AG04449 (cell line): ENCODE measurements at regions of chr5 and their contacts with region 1.

Region 1: GRCh38 chr5:96336351-96336985 is 96.6 kb downstream of the PCSK1 start:
- DNase-seq: peak; percentile 72
- H3K4me3 ChIP-seq: no peak overlapping the region
- CTCF ChIP-seq: peak; percentile 80

Region 2: GRCh38 chr5:95858661-95859326 is 477.7 kb before region 1 on chr5:
- CTCF ChIA-PET with region 1: interaction called, 41 read pairs
- POLR2A ChIA-PET with region 1: interaction called, 3 read pairs
- DNase-seq: peak; percentile 97
- H3K4me3 ChIP-seq: peak overlapping the region; percentile 57
- CTCF ChIP-seq: peak; percentile 99

Region 3: GRCh38 chr5:95961617-95962474 is 374.6 kb before region 1 on chr5 and contains the start of gene ELL2:
- CTCF ChIA-PET with region 1: interaction called, 43 read pairs
- POLR2A ChIA-PET with region 1: no interaction called
- DNase-seq: peak; percentile 86
- H3K4me3 ChIP-seq: peak within 1 kb of the TSS; percentile 92
- CTCF ChIP-seq: no peak

Region 4: DNA sequence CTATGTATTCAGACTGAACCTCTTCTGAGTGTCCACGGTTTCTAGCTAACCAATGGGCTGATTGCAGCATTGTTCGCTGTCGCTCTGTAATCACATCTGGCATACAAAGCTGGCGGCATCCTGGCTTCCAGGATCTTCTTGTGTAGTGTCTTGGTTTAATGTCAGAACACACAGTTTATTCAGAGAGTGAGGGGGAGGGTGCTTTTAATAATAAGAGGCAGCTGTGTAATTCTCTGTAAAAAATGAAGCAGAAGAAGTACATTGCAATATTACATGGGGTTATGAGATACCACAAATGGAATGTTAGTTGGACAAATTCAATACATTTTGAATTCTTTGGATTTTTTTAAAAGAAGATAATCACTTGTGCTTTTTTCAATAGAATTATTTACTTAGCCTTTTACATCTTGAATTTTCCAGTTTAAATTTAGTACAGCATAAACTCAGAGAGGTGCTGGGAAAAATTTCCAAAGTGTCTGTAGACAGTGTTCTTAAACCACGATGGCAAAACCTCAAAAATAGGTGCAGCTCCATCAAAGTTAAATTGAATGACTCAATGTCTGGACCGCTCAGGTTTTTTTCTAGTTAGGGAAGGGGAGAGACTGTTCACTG is 109.4 kb before region 1 on chr5:
- CTCF ChIA-PET with region 1: interaction called, 19 read pairs
- POLR2A ChIA-PET with region 1: no interaction called
- DNase-seq: peak; percentile 94
- H3K4me3 ChIP-seq: no peak overlapping the region
- CTCF ChIP-seq: no peak

Region 5: DNA sequence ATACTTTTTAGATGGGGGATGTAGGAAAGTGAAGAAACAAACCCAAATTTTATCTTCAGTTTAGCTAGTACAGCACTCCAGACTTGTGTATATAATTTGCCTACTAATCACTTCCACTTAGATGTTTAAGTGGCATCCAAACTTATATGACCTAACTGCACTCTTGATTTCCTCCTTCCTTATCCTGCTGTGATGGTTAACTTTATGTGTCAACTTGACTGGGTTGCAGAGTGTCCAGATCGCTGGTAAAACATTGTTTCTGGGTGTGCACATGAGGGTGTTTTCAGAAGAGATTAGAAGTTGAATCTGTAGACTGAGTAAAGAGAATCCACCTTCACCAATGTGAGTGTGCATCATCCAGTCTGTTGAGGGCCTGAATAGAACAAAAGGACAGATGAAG is 16.8 kb after region 1 on chr5:
- CTCF ChIA-PET with region 1: no interaction called
- POLR2A ChIA-PET with region 1: no interaction called
- DNase-seq: no peak
- H3K4me3 ChIP-seq: no peak overlapping the region
- CTCF ChIP-seq: no peak

Region 6: DNA sequence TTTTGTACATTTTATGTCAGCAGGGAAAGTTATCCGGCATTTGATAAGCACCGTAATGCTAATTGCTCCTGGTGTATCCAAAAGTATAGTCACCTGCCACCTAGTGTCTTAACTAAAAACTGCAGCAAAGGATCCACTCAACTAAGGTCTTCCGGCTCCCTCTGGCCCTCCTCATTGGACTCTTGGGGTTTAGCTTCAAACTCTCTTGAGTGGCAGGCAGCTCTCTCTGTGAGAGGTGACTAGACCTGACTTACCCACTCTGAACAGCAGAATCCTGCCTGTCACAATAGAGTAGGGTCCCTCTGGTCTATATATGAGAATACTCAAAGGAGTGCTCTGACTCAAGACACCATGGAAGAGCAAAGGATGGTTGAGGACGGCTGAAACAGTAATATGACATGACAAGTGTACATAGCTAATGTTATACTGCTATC is 265.4 kb after region 1 on chr5:
- CTCF ChIA-PET with region 1: interaction called, 662 read pairs
- POLR2A ChIA-PET with region 1: no interaction called
- DNase-seq: no peak
- H3K4me3 ChIP-seq: no peak overlapping the region
- CTCF ChIP-seq: peak; percentile 62

Region 7: DNA sequence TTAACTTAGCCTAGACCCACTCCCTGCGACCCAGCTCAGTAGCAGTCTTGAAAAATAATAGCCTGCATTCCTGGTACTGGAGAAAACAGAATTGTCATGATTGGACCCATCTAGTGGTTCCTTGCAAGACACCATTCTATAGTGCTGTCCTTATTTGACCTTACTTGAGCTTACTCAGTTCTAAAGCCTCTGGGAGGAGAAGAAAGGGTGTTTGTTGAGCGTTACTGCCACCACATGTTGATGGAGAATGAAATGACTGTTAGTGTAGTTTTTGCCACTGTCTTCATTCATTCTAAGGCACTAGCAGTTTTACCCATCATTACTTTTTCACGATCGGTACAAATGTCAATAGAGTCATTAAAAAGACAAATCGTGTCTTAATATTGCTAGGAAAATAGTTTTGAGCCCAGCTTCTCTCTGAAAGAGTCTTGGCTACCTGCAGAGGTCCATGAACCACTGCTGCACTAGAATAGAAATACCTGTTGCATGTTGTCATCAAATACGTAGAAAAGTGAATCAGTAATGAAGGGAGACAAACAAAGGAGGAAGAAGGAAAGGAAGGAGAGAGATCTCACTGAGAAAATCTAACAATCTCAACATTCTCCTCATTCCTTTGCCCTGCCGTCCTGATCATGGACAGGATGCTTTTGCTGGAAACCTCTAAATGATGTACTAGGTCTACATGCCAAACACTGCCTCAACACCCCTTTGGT is 710.0 kb after region 1 on chr5:
- CTCF ChIA-PET with region 1: no interaction called
- POLR2A ChIA-PET with region 1: no interaction called
- DNase-seq: peak; percentile 14
- H3K4me3 ChIP-seq: no peak overlapping the region
- CTCF ChIP-seq: no peak